PC-3 (cell line): ENCODE measurements at regions of chr11 and their contacts with region 1.

Region 1: DNA sequence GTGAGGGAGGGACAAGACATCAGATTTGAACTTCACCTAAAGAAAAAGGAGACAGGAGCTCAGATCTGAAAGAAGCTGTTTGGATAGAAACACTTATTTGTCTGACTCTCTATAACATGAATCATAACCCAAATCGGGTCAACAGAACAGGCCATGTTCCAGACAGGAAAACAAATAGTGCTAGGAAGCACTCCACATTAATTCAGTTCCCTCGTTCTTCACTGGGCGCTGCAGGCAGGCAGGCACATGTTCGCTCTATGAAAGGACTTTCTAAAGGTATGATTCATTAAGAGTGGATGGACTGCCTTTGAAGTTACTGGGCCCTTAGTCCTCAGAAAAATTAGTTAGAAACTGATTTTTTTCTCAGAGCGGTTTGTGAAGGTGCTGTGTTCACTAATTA is 137.5 kb upstream of the TRPC6 start:
- DNase-seq: peak; percentile 79
- ATAC-seq: peak; percentile 73
- H3K4me3 ChIP-seq: no peak overlapping the region
- H3K27ac ChIP-seq: peak overlapping the region; percentile 35
- H3K4me1 ChIP-seq: peaks cover 44% of the 10 kb centered on the region
- H3K27me3 ChIP-seq: no peaks in the 10 kb centered on the region
- CTCF ChIP-seq: no peak

Region 2: GRCh38 chr11:101456812-101457211 is 264.5 kb before region 1 on chr11:
- CTCF ChIA-PET with region 1: no interaction called
- POLR2A ChIA-PET with region 1: no interaction called
- intact Hi-C with region 1: loop called (anchors 5 kb)
- DNase-seq: peak; percentile 66
- ATAC-seq: 0 out of 2 replicates have a peak, but pooled peaks have one; percentile 23
- H3K4me3 ChIP-seq: no peak overlapping the region
- H3K27ac ChIP-seq: no peak overlapping the region
- H3K4me1 ChIP-seq: peaks cover 25% of the 10 kb centered on the region
- H3K27me3 ChIP-seq: no peaks in the 10 kb centered on the region
- CTCF ChIP-seq: peak; percentile 81